ENCODE measurements at regions of chr12 and their contacts with region 1.

Region 1: DNA sequence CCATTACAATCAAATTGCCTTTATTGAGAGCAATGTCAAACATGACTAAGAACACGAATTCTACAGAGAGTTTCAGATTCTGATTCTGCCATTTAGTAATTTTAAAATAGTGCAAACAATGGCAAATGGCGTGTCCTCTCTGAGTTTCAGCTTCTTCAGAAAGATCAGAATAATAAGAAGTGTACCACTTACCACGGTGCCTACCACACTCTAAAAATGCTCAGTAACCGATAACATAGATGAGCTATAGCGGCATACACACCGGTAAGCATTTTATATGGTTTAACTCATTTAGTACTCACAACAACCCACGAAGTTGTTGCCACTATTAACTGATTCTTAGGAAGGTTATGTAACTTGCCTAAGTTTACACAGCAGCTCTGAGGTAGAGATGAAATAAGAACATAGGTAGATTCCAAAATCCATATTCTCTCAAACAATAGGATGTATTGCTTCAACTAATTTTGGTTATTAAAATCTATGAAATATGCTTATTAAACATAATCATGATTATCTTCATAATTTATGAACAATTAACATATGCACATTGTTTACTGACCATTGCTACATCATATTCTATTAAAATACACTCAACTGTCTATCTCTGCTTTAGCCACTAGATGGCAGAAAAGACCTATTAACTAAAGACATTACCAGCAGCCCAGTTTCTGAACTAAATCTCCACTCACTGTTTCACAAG is 38.3 kb downstream of the SLC6A15 start:
- DNase-seq: no peak

Region 2: GRCh38 chr12:85029456-85029855 is 155.2 kb after region 1 on chr12:
- intact Hi-C with region 1: loop called (anchors 2 kb)
- DNase-seq: no peak

Measured in cardiac septum (tissue), 1 donor.